Activated CD4-positive, alpha-beta memory T cell treated with anti-CD3 and anti-CD28 coated beads for 36 hours (primary cell): ENCODE measurements at regions of chr1 and their contacts with region 1.

Region 1: DNA sequence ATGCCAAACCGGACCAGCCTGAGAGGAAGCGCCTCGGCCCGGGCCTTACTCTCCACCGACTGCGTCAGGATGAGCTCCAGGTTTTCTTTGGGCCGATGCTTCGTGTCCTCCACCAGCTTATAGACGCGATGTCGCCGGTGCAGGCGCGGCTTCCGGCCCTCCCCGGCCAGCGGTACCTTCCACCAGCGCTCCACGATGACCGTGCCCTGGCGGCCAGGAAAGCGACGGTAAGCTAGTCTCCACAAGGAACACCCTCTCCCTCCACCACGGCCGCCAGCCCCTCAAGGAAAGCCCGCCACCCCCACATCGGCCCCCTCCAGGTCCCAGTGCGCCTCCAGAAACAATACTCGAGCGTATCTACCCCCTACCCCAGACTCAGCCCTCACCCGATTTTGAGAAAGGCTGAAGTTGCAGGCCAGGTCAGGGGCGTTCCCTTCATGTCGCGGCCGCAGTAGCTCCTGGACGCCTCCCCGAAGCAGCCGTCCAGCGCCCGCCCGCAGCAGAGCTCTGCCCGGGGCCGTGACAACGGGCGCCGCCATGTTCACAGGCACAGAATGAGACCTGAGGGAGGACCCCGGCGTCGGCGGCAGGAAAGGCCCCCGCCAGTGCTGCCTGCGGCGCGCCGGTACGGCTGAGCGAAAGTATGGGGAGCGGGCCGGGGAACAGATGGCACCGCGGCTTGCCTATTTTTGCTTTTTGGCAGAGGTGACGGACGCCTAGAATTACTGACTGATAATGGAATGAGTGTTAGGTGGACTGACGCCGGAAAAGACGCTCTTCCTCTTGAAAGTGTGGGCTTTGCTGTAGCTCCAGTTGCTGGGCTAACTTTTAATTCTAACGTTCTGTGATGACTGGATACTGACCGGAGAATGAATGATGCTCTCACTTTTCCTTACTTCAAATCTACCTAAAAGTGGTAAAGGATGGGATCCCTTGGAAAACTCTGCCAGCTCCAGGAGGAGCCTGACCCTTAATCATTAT is at the start of gene MRPL9:
- DNase-seq: peak; percentile 93
- H3K4me3 Mint-ChIP-seq: peak within 1 kb of the TSS; percentile 78
- H3K27ac Mint-ChIP-seq: peak within 1 kb of the TSS; percentile 86
- H3K4me1 Mint-ChIP-seq: peaks cover 16% of the 10 kb centered on the region
- H3K27me3 Mint-ChIP-seq: no peaks in the 10 kb centered on the region
- total RNA-seq, gene MRPL9: 135 to 154 TPM

Region 2: DNA sequence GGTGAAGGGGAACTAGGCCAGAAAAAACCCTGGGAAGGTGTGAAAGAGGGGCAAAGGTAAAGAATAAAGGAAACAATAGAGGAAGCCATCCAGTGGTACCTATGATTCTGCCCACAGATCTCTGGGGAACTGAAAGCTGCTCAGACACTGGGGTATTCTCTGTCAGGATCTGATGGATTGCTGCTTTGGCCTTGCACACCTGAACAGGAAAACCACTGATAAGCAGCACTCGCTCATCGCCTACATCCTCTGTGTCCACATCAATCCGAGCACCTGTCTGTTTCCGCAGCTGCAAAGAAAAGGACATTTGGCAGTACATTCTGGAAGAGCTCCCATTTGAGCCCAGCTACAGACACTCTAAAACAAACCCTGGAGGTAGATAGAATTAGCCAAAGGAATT is 16.6 kb after region 1 on chr1:
- CTCF ChIA-PET with region 1: no interaction called
- POLR2A ChIA-PET with region 1: no interaction called
- intact Hi-C with region 1: no loop called
- DNase-seq: no peak
- H3K4me3 Mint-ChIP-seq: no peak overlapping the region
- H3K27ac Mint-ChIP-seq: no peak overlapping the region
- H3K4me1 Mint-ChIP-seq: no peaks in the 10 kb centered on the region
- H3K27me3 Mint-ChIP-seq: no peaks in the 10 kb centered on the region

Region 3: GRCh38 chr1:151820940-151821339 is 57.7 kb after region 1 on chr1:
- CTCF ChIA-PET with region 1: no interaction called
- POLR2A ChIA-PET with region 1: interaction called, 10 read pairs
- intact Hi-C with region 1: no loop called
- DNase-seq: peak; percentile 55
- H3K4me3 Mint-ChIP-seq: peak overlapping the region; percentile 36
- H3K27ac Mint-ChIP-seq: peak overlapping the region; percentile 85
- H3K4me1 Mint-ChIP-seq: peaks cover 67% of the 10 kb centered on the region
- H3K27me3 Mint-ChIP-seq: no peaks in the 10 kb centered on the region